ENCODE measurements at regions of chr11 and their contacts with region 1.

Region 1: DNA sequence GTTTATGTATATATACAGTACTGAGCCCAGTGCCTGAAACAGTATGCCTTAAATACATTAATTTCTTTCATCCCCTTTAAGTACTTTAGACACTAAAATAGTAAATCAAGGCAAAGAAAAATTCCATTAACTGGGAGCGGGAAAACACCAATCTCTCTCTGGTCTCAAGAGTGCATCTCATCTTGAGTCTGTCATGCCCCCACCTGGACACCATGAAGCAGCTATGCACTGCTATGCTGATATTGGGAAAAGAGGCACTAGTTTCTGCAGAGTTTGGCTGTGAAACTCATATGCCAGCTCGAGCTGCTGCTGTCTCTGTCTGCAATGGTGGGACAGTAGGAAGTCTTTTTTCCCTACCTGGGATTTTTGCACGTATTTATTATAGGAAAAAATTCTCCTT is 754.4 kb upstream of the RAG2 start:
- DNase-seq: no peak
- ATAC-seq: no peak
- H3K4me3 ChIP-seq: no peak overlapping the region
- H3K27ac ChIP-seq: no peak overlapping the region
- H3K4me1 ChIP-seq: no peaks in the 10 kb centered on the region
- H3K27me3 ChIP-seq: no peaks in the 10 kb centered on the region
- CTCF ChIP-seq: no peak

Region 2: GRCh38 chr11:37286890-37287289 is 65.6 kb before region 1 on chr11:
- intact Hi-C with region 1: loop called in 1 of 10 experiments (anchors 10 kb)
- DNase-seq: no peak
- ATAC-seq: no peak
- H3K4me3 ChIP-seq: no peak overlapping the region
- H3K27ac ChIP-seq: no peak overlapping the region
- H3K4me1 ChIP-seq: no peaks in the 10 kb centered on the region
- H3K27me3 ChIP-seq: no peaks in the 10 kb centered on the region
- CTCF ChIP-seq: no peak

Measured in heart right ventricle (tissue), 16 donors.